ENCODE measurements at regions of chr4 and their contacts with region 1.

Region 1: GRCh38 chr4:55291227-55291640 is 54.8 kb upstream of the SRD5A3 start:
- DNase-seq: no peak
- H3K4me3 ChIP-seq: no peak overlapping the region
- H3K27ac ChIP-seq: no peak overlapping the region
- H3K4me1 ChIP-seq: peaks cover 5% of the 10 kb centered on the region
- H3K27me3 ChIP-seq: no peaks in the 10 kb centered on the region
- CTCF ChIP-seq: no peak
- EP300 ChIP-seq: no peak
- POLR2A ChIP-seq: no peak

Region 2: GRCh38 chr4:55132775-55133174 is 158.5 kb before region 1 on chr4:
- intact Hi-C with region 1: loop called in 1 of 4 experiments (anchors 10 kb)
- DNase-seq: no peak
- H3K4me3 ChIP-seq: no peak overlapping the region
- H3K27ac ChIP-seq: no peak overlapping the region
- H3K4me1 ChIP-seq: no peaks in the 10 kb centered on the region
- H3K27me3 ChIP-seq: no peaks in the 10 kb centered on the region
- CTCF ChIP-seq: no peak
- EP300 ChIP-seq: no peak
- POLR2A ChIP-seq: no peak

Measured in ovary (tissue), 10 donors.